Common myeloid progenitor, CD34-positive (primary cell): ENCODE measurements at regions of chr2 and their contacts with region 1.

Region 1: GRCh38 chr2:168118733-168119514 is 128.5 kb downstream of the STK39 start:
- DNase-seq: peak; percentile 78 to 87 (median 84)
- H3K4me3 ChIP-seq: peak overlapping the region in 3 of 7 experiments; percentile 2 to 46 (median 39)
- H3K27ac ChIP-seq: no peak overlapping the region
- H3K4me1 ChIP-seq: peaks cover 0 to 12% (median 3%) of the 10 kb centered on the region in 4 experiments
- H3K27me3 ChIP-seq: no peaks in the 10 kb centered on the region

Region 2: DNA sequence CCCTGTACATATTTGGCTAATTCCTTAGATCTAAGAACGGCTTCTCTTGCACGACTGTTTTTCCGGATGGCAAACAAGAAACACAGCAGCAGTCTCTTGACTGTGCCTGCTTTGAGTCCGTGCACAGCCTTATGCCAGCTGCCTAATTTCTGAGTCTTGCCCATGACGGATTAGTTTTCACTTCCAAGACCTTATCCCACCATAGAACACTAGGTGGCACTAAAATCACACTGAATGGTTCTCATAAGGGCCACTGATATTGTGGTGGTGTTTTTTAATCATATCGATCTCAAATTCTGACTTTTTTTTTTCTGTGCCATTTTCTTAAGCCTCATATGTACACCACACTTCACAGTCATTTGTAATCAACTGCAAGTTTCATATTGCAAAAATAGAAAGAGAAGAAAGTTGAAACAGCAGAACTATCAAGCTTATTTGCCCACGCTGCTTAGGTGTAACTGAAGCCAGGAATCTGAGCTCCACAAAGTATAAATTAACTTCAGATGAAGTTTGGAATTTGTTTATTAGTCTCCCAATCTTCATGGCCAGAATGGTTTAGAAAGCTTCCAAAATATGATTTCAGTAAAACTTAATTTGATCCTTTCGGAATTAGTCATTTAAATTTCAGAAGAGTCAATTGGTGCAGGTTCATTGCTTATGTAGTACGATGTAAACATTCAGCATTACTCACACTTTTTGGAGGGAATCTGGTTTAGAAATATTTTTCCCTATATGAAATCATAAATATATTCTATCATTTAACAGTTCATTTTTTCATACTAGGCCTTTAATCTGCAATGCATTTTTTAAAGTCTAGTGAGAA is 1579.4 kb before region 1 on chr2:
- CTCF ChIA-PET with region 1: interaction called, 31 read pairs
- POLR2A ChIA-PET with region 1: interaction called, 3 read pairs
- DNase-seq: peak; percentile 64 to 80 (median 68)
- H3K4me3 ChIP-seq: peak overlapping the region in 1 of 7 experiments; percentile 39
- H3K27ac ChIP-seq: no peak overlapping the region
- H3K4me1 ChIP-seq: peaks cover 0 to 3% (median 1%) of the 10 kb centered on the region in 4 experiments
- H3K27me3 ChIP-seq: no peaks in the 10 kb centered on the region

Region 3: DNA sequence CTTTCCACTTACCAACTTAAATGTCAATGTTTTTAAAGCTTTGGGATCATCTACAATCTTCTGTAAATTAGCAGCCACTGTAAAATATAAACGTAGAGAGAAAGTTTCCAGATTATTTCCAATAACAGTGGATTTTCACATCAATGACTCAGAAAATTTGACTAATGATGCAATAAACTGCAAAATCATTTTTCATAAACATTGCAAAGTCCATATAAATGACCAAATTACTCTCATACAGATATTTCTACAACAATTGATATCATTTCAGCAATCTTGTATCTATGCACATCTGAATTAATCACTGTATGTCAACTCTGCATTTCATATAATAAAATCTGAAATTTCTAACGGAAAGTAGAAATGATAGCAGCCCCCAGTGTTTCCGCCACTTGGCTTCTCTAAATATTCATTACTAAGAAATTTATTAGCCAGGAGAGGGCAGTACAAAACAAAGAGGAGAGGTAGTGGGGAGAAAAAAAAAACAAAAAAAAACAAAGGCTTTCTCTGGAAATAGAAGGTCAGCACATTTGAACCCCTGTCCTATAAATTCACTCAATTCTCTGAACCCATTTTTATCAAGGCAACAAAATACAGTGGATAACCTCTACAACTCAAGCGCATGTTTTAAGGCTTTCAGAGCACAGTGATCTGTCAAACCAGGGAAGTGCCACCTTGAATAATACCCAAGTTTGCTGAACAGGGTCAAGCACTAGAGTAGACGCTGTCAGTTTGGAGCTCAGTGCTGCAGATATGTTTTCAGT is 154.1 kb before region 1 on chr2:
- CTCF ChIA-PET with region 1: interaction called, 23 read pairs
- POLR2A ChIA-PET with region 1: no interaction called
- DNase-seq: peak in 2 of 3 donors; percentile 16 to 18
- H3K4me3 ChIP-seq: no peak overlapping the region
- H3K27ac ChIP-seq: no peak overlapping the region
- H3K4me1 ChIP-seq: no peaks in the 10 kb centered on the region
- H3K27me3 ChIP-seq: no peaks in the 10 kb centered on the region

Region 4: GRCh38 chr2:168107322-168107721 is 11.6 kb before region 1 on chr2:
- CTCF ChIA-PET with region 1: interaction called, 47 read pairs
- POLR2A ChIA-PET with region 1: no interaction called
- DNase-seq: no peak
- H3K4me3 ChIP-seq: no peak overlapping the region
- H3K27ac ChIP-seq: no peak overlapping the region
- H3K4me1 ChIP-seq: no peaks in the 10 kb centered on the region
- H3K27me3 ChIP-seq: no peaks in the 10 kb centered on the region

Region 5: DNA sequence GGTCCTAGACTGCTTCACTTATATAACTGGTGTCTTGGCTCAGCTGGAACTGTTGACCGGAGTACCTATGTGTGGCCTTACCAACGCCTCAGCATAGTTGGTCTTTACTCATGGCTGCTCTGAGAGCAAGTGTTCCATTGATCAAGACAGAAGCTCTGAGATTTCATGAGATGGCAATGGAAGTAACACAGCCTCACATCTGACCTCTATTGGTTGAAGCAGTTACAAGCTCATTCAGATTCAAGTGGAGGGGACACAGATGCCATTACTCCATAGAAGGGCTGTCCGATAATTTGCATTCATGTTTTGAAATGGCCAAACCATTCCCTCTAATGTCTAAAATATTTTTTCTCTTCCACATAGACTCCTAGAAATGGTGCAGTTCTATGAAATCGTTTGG is 174.8 kb after region 1 on chr2:
- CTCF ChIA-PET with region 1: no interaction called
- POLR2A ChIA-PET with region 1: no interaction called
- DNase-seq: no peak
- H3K4me3 ChIP-seq: no peak overlapping the region
- H3K27ac ChIP-seq: no peak overlapping the region
- H3K4me1 ChIP-seq: no peaks in the 10 kb centered on the region
- H3K27me3 ChIP-seq: no peaks in the 10 kb centered on the region